ENCODE measurements at regions of chr7 and their contacts with region 1.

Region 1: GRCh38 chr7:47786557-47787248 is 161.6 kb downstream of the PKD1L1 start:
- DNase-seq: peak; percentile 90 to 100
- ATAC-seq: peak; percentile 97
- H3K4me3 ChIP-seq: no peak overlapping the region
- H3K27ac ChIP-seq: peak overlapping the region; percentile 95
- H3K4me1 ChIP-seq: peaks cover 70% of the 10 kb centered on the region
- CTCF ChIP-seq: no peak; the same call in 2 of the 3 replicates
- EP300 ChIP-seq: peak; percentile 95 to 99
- POLR2A ChIP-seq: no peak
- RAD21 ChIP-seq: peak; percentile 34 to 74

Region 2: GRCh38 chr7:47591655-47592572 is 194.8 kb before region 1 on chr7:
- CTCF ChIA-PET with region 1: interaction called, 4 read pairs
- POLR2A ChIA-PET with region 1: interaction called, 20 read pairs
- DNase-seq: peak; percentile 73 to 96
- ATAC-seq: peak; percentile 71 to 75
- H3K4me3 ChIP-seq: peak overlapping the region; percentile 36
- H3K27ac ChIP-seq: peak overlapping the region; percentile 99
- H3K4me1 ChIP-seq: peaks cover 88% of the 10 kb centered on the region
- CTCF ChIP-seq: no peak
- EP300 ChIP-seq: peak; percentile 90 to 96; a peak in 4 of 5 replicates
- POLR2A ChIP-seq: no peak
- RAD21 ChIP-seq: peak; percentile 14 to 53

Region 3: DNA sequence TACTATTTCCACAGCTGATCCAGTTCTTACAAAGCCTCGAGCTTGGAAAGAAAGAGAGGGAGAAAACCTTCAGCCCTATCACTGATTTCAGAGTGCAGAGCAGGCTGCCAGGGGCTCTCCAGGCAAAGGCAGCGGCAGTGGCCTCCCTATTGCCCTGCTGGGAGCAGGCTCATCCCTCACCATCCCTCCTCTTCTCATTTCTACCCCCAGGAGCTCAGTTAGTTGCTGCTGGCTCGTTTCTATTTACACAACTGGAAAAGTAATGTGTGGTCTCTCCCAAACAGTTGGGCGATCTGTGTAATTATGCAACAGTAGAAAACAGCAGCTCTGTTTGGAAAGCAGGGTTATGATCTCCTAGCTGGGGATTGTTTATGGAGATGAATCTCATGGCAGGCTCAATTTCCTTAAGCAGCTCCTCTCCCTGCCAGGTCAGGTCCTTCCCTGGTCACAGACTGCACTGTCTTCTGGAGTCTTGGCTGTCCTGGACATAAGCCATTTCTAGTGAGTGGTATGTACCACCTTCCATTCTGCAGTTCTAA is 176.1 kb before region 1 on chr7:
- CTCF ChIA-PET with region 1: no interaction called
- POLR2A ChIA-PET with region 1: interaction called, 11 read pairs
- DNase-seq: peak; percentile 18 to 94
- ATAC-seq: peak; percentile 83 to 91
- H3K4me3 ChIP-seq: no peak overlapping the region
- H3K27ac ChIP-seq: peak overlapping the region; percentile 99
- H3K4me1 ChIP-seq: peaks cover 74% of the 10 kb centered on the region
- CTCF ChIP-seq: no peak
- EP300 ChIP-seq: peak; percentile 93 to 95; a peak in 4 of 5 replicates
- POLR2A ChIP-seq: no peak
- RAD21 ChIP-seq: peak; percentile 44 to 71

Region 4: DNA sequence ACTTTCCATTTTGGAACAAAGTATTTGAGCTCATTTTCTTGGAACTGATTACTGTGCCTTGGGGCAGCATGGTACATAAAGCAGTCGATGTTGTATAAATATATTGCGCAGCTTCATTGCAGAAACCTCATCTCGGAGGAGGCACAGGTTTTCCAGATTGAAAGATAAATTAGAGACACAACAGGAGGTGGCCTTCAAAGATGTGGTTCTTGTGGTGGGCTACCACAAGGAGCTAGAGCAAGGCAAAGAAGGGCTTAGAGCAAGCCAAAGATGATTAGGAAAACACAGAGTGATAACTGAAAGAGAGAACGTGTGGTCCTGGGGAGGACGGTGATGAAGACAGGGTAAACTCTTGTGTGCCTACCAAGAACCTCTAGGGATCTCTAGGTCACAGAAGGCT is 35.7 kb before region 1 on chr7:
- CTCF ChIA-PET with region 1: no interaction called
- POLR2A ChIA-PET with region 1: no interaction called
- DNase-seq: no peak
- ATAC-seq: no peak
- H3K4me3 ChIP-seq: no peak overlapping the region
- H3K27ac ChIP-seq: peak overlapping the region in 1 of 2 experiments; percentile 18; a peak in 2 of 6 replicates
- H3K4me1 ChIP-seq: no peaks in the 10 kb centered on the region
- CTCF ChIP-seq: no peak
- EP300 ChIP-seq: no peak
- POLR2A ChIP-seq: no peak
- RAD21 ChIP-seq: no peak

Region 5: DNA sequence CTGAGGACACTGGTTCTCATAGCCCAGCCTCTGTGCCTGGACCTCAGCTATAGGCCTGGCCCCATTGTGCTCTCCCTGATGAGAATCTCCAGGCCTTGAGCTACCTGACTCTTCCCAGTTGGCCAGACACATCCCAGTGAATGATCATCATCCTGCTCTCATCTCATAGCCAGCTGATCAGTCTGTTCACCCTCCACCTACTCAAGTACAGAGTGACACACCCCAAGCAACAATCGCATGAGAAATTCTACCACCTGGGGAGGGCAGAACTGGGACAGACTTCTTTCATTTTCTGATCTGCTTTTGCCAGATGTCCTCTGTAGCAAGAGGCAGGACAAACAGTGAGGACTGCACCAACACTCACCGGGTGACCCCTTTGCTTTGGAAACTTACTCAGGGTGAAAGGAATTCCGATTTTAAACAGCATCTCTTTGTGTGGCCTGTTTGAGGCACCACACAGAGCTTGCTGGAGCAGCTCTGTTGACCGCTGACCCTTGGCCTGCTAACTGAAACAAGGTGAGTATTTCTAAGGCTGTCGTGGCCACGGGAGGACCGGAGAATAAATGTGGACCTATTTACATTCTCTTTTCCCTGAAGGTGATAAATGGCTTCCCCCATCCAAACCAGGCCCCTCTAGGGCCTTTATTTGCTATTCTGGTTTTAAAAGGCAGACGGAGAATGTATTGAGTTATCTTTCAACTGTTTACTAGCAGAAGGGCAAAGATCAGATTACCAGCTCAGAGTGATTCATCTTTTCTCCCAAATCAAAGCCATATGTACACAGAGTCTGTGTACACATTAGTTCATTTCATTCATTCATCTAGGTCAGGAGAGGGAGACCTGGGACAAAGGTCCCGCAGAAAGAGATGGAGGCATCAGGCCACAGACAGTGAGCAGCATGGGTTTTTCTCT is 23.4 kb before region 1 on chr7:
- CTCF ChIA-PET with region 1: interaction called, 17 read pairs
- POLR2A ChIA-PET with region 1: interaction called, 16 read pairs
- DNase-seq: peak; percentile 96 to 99
- ATAC-seq: peak; percentile 91 to 93
- H3K4me3 ChIP-seq: no peak overlapping the region
- H3K27ac ChIP-seq: peak overlapping the region; percentile 96 to 99
- H3K4me1 ChIP-seq: peaks cover 47% of the 10 kb centered on the region
- CTCF ChIP-seq: no peak
- EP300 ChIP-seq: peak; percentile 96 to 98; a peak in 4 of 5 replicates
- POLR2A ChIP-seq: no peak
- RAD21 ChIP-seq: peak; percentile 36 to 70

Measured in A549 (cell line).